ENCODE measurements at regions of chr6 and their contacts with region 1.

Region 1: DNA sequence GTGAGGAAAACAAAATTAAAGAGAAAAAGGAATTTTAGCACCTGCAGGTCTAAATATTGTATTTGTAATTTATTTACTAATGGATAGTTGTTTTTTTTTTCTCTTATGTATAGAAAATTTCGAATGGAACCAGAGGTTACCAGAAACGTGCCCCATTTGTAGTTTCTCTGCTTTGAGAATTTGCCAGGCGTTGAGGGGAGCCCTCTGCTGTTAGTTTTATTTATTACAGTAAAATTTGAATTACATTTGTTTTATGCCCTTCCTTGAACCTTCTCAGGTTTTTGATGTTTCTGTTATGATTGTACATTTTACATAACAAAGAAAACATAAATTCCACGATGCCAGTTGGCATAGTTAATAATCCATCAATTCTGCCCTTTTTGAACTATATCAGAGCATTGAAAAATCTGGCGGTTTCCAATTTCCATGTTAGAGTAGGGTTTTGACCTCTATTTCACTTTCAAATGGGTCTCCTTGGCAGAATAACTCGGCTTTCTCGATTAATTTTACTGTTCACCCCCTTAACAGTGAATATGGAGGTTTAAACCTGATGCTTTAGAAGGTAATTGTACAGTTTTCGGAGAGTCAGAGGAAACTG is 35.1 kb upstream of the RFPL4B start:
- DNase-seq: no peak
- ATAC-seq: peak in 3 of 4 donors; percentile 62 to 68 (median 62)
- H3K4me3 ChIP-seq: no peak overlapping the region
- H3K27ac ChIP-seq: no peak overlapping the region
- H3K4me1 ChIP-seq: no peaks in the 10 kb centered on the region
- H3K27me3 ChIP-seq: no peaks in the 10 kb centered on the region
- CTCF ChIP-seq: peak; percentile 6 to 45 (median 40)

Region 2: DNA sequence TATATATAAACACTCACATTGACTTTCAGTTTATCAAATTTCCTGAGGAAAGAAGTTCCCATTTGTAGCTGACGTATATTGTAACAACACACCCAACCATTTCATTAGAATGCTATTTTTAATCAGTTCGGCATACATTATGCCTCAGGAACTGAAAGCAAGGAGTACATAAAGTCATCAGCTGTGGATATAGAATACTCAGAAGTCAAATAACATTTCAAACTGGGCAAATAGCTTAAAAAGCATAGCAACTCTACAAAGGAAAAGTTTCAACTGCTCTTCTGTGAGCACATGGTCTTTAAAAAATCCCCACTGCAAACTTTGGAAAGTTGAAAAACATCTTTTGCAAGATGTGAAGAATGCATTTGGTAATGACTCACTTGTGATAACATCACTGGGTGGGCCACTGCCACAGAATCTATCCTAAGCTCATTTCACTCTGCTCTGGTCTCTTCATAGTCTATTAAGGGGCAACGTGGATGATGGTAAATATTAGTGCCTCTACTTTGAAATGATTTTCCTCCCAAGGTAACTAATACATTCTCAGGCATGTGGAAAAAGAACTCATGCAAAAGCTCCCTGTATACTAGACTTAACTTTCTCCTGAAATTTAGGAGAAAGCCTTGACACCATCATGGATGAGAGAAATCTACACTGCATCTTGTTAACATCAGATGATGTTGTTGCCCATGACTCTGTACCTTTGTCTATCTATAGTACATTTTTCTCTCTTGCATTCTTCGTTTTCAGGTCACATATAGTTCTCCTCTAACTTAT is 488.0 kb before region 1 on chr6:
- intact Hi-C with region 1: no loop called
- DNase-seq: no peak
- ATAC-seq: peak in 2 of 4 donors; percentile 42 to 61
- H3K4me3 ChIP-seq: no peak overlapping the region
- H3K27ac ChIP-seq: no peak overlapping the region
- H3K4me1 ChIP-seq: no peaks in the 10 kb centered on the region
- H3K27me3 ChIP-seq: no peaks in the 10 kb centered on the region
- CTCF ChIP-seq: no peak

Region 3: DNA sequence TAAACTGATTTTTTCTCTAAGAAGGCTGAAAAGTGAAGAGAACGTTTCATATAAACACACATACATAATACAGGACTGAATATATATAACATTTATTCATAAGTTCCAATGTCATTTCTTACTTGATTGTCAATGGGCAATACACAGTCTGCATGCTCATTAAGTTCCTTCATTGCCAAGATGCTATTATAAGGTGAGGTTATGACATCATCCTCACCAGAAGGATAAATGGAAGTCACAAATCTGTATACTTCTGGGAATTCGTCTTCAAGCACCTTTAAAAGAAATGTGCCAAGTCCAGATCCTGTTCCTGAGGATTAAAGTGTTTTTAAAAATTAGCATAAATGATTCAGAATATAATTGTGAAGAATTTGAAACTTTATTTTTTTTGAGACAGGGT is 235.8 kb before region 1 on chr6:
- intact Hi-C with region 1: no loop called
- DNase-seq: no peak
- ATAC-seq: no peak
- H3K4me3 ChIP-seq: no peak overlapping the region
- H3K27ac ChIP-seq: no peak overlapping the region
- H3K4me1 ChIP-seq: no peaks in the 10 kb centered on the region
- H3K27me3 ChIP-seq: no peaks in the 10 kb centered on the region
- CTCF ChIP-seq: no peak

Region 4: DNA sequence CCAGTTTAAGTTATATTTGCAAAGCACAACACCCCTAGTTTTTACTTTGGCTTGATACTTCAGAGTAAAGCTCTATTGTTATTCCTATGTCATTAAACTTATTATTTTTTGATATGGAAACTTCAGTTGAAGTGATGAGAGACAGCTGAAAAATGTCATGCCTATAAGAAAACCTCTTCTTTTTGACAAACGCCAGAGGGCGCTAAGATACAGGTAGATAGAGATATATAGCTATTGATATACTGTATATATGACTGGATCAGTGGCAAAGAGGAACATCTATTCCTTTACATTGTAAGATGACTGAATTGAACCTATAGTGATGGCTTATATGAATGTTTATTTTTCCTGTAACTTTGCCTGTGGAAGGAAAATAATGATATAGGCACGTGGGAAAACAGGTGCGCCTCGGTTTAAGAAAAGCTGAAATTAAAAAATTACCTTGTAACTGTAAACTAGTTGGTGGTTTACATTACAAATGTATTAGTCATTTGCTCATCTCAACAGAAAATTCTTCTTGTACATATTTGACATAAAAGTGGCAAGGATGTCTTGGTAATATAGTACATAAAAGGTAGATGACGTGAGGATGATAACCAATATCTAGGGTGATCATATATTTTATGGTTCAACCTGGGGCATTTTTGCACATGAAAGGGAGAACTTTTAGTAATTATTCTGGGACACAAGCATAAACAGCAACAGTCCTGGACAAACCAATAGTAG is 131.8 kb before region 1 on chr6:
- intact Hi-C with region 1: loop called in 2 of 3 experiments (anchors 5 kb)
- DNase-seq: peak in 3 of 6 donors; percentile 20 to 53 (median 36)
- ATAC-seq: peak; percentile 60 to 82 (median 76)
- H3K4me3 ChIP-seq: no peak overlapping the region
- H3K27ac ChIP-seq: no peak overlapping the region
- H3K4me1 ChIP-seq: no peaks in the 10 kb centered on the region
- H3K27me3 ChIP-seq: no peaks in the 10 kb centered on the region
- CTCF ChIP-seq: peak; percentile 28 to 55 (median 40)

Region 5: GRCh38 chr6:112269114-112269513 is 42.9 kb before region 1 on chr6:
- intact Hi-C with region 1: no loop called
- DNase-seq: no peak
- ATAC-seq: no peak
- H3K4me3 ChIP-seq: no peak overlapping the region
- H3K27ac ChIP-seq: no peak overlapping the region
- H3K4me1 ChIP-seq: no peaks in the 10 kb centered on the region
- H3K27me3 ChIP-seq: no peaks in the 10 kb centered on the region
- CTCF ChIP-seq: no peak

Measured in pancreas (tissue), 10 donors.